Lower lobe of right lung (tissue), 2 donors: ENCODE measurements at regions of chr1 and their contacts with region 1.

Region 1: GRCh38 chr1:78607334-78607927 is 12.8 kb upstream of the IFI44L start:
- DNase-seq: no peak
- ATAC-seq: no peak
- H3K4me3 ChIP-seq: no peak overlapping the region
- H3K27ac ChIP-seq: no peak overlapping the region
- H3K4me1 ChIP-seq: no peaks in the 10 kb centered on the region
- H3K27me3 ChIP-seq: no peaks in the 10 kb centered on the region
- CTCF ChIP-seq: peak; percentile 49

Region 2: GRCh38 chr1:78132174-78132947 is 475.1 kb before region 1 on chr1:
- intact Hi-C with region 1: loop called (anchors 5 kb)
- DNase-seq: no peak
- ATAC-seq: no peak
- H3K4me3 ChIP-seq: no peak overlapping the region
- H3K27ac ChIP-seq: no peak overlapping the region
- H3K4me1 ChIP-seq: no peaks in the 10 kb centered on the region
- H3K27me3 ChIP-seq: no peaks in the 10 kb centered on the region
- CTCF ChIP-seq: no peak

Region 3: GRCh38 chr1:78483903-78484302 is 123.5 kb before region 1 on chr1:
- intact Hi-C with region 1: no loop called
- DNase-seq: no peak
- ATAC-seq: no peak
- H3K4me3 ChIP-seq: no peak overlapping the region
- H3K27ac ChIP-seq: no peak overlapping the region
- H3K4me1 ChIP-seq: no peaks in the 10 kb centered on the region
- H3K27me3 ChIP-seq: no peaks in the 10 kb centered on the region
- CTCF ChIP-seq: no peak